ENCODE measurements at regions of chr4 and their contacts with region 1.

Region 1: GRCh38 chr4:123102897-123103471 is 180.6 kb upstream of the NUDT6 start:
- DNase-seq: no peak
- H3K4me3 Mint-ChIP-seq: no peak overlapping the region
- H3K27ac Mint-ChIP-seq: no peak overlapping the region
- H3K4me1 Mint-ChIP-seq: peaks cover 2% of the 10 kb centered on the region
- H3K27me3 Mint-ChIP-seq: no peaks in the 10 kb centered on the region

Region 2: DNA sequence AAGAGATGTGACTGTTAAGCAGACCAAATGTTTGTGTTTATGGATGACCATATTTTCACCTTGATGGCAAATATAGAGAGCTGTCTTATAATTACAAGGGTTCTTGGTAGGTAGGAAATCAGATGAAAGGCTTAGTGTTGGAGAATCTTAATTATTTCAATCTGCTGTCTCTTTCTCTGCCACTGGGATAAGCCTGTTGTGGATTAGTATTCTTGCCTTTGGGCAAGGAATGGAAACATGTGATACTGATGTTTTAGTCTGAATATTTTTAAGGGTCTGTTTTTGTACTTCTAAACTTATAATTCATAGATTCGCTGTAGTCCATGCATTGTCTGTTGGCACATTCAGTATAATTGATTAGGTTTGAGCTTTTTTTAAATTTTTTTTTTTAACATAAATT is 156.8 kb before region 1 on chr4:
- intact Hi-C with region 1: no loop called
- DNase-seq: no peak
- H3K4me3 Mint-ChIP-seq: no peak overlapping the region
- H3K27ac Mint-ChIP-seq: no peak overlapping the region
- H3K4me1 Mint-ChIP-seq: no peaks in the 10 kb centered on the region
- H3K27me3 Mint-ChIP-seq: no peaks in the 10 kb centered on the region

Region 3: GRCh38 chr4:124105212-124105611 is 1002.2 kb after region 1 on chr4:
- intact Hi-C with region 1: no loop called
- DNase-seq: no peak
- H3K4me3 Mint-ChIP-seq: no peak overlapping the region
- H3K27ac Mint-ChIP-seq: no peak overlapping the region
- H3K4me1 Mint-ChIP-seq: no peaks in the 10 kb centered on the region
- H3K27me3 Mint-ChIP-seq: no peaks in the 10 kb centered on the region

Region 4: DNA sequence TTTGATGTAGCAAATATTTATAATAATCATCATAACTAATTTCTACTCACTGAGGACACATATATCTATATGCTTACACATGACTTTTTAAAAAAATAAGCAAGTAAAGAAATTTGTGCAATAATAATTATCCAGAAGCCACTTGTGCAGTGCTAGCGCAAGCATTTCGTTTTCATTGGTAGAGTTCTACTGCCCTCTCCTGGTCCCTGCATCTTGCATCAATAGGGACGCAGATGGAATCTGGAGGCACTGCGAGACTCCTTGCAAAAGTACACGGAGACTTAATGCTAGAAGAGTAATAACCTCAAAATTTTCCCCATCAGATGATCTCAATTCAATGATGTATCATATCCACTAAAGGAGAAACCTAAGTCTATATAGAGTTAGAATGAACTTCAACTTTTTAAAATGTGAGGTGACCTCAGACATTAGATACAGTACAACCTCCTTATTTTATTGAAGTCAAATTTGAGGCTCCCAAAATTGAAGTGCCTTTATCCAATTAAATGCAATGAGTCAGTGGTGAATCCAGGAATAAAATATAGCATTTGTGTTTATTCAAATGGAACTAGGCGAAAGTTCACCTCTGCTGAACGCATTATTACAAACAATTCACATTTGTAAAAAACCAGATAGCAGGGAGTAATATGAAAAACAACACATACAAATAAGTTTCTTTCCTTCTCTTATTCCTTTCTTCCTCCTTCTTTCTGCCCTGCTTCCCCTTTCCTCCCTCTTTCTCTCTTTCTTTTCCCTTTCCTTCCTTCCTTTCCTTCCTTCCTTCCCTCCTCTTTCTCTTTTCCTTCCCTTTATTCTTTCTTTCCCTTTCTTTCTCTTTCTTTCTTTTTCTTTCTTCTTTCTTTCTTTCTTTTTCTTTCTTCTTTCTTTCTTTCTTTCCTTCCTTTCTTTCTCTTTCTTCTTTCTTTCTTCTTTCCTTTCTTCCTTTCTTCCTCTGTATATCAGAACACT is 1159.5 kb after region 1 on chr4:
- intact Hi-C with region 1: loop called (anchors 5 kb)
- DNase-seq: peak; percentile 10
- H3K4me3 Mint-ChIP-seq: no peak overlapping the region
- H3K27ac Mint-ChIP-seq: no peak overlapping the region
- H3K4me1 Mint-ChIP-seq: no peaks in the 10 kb centered on the region
- H3K27me3 Mint-ChIP-seq: no peaks in the 10 kb centered on the region

Region 5: GRCh38 chr4:124322234-124323065 is 1219.5 kb after region 1 on chr4:
- intact Hi-C with region 1: loop called (anchors 5 kb)
- DNase-seq: no peak
- H3K4me3 Mint-ChIP-seq: no peak overlapping the region
- H3K27ac Mint-ChIP-seq: no peak overlapping the region
- H3K4me1 Mint-ChIP-seq: no peaks in the 10 kb centered on the region
- H3K27me3 Mint-ChIP-seq: no peaks in the 10 kb centered on the region